Activated CD4-positive, alpha-beta memory T cell treated with anti-CD3 and anti-CD28 coated beads, Interleukin-2, amount 10 ng/mL, durations not matched to agents 7 days and 5 days (primary cell): ENCODE measurements at regions of chr11 and their contacts with region 1.

Region 1: GRCh38 chr11:72722050-72722748 is 30.0 kb downstream of the ARAP1 start:
- DNase-seq: peak; percentile 90
- H3K4me3 Mint-ChIP-seq: peak overlapping the region; percentile 89
- H3K27ac Mint-ChIP-seq: peak overlapping the region; percentile 86
- H3K4me1 Mint-ChIP-seq: peaks cover 60% of the 10 kb centered on the region
- H3K27me3 Mint-ChIP-seq: no peaks in the 10 kb centered on the region

Region 2: GRCh38 chr11:72568861-72569260 is 153.3 kb before region 1 on chr11:
- CTCF ChIA-PET with region 1: no interaction called
- POLR2A ChIA-PET with region 1: no interaction called
- DNase-seq: no peak
- H3K4me3 Mint-ChIP-seq: no peak overlapping the region
- H3K27ac Mint-ChIP-seq: peak overlapping the region; percentile 75
- H3K4me1 Mint-ChIP-seq: peaks cover 40% of the 10 kb centered on the region
- H3K27me3 Mint-ChIP-seq: peaks cover 8% of the 10 kb centered on the region

Region 3: GRCh38 chr11:72673943-72674828 is 48.0 kb before region 1 on chr11 and contains the start of gene PDE2A:
- CTCF ChIA-PET with region 1: no interaction called
- POLR2A ChIA-PET with region 1: no interaction called
- DNase-seq: no peak
- H3K4me3 Mint-ChIP-seq: no peak within 1 kb of the TSS
- H3K27ac Mint-ChIP-seq: no peak within 1 kb of the TSS
- H3K4me1 Mint-ChIP-seq: peaks cover 2% of the 10 kb centered on the region
- H3K27me3 Mint-ChIP-seq: peaks cover 77% of the 10 kb centered on the region
- total RNA-seq, gene PDE2A: 0.93 to 1.8 TPM

Region 4: GRCh38 chr11:72736452-72737069 is 14.4 kb after region 1 on chr11:
- CTCF ChIA-PET with region 1: interaction called, 23 read pairs
- POLR2A ChIA-PET with region 1: interaction called, 7 read pairs
- DNase-seq: peak; percentile 81
- H3K4me3 Mint-ChIP-seq: peak overlapping the region; percentile 41
- H3K27ac Mint-ChIP-seq: peak overlapping the region; percentile 97
- H3K4me1 Mint-ChIP-seq: peaks cover 57% of the 10 kb centered on the region
- H3K27me3 Mint-ChIP-seq: no peaks in the 10 kb centered on the region

Region 5: GRCh38 chr11:72814286-72815109 is 92.3 kb after region 1 on chr11 and contains the start of gene ATG16L2:
- CTCF ChIA-PET with region 1: interaction called, 29 read pairs
- POLR2A ChIA-PET with region 1: interaction called, 24 read pairs
- DNase-seq: peak; percentile 91
- H3K4me3 Mint-ChIP-seq: peak within 1 kb of the TSS; percentile 99
- H3K27ac Mint-ChIP-seq: peak within 1 kb of the TSS; percentile 99
- H3K4me1 Mint-ChIP-seq: peaks cover 52% of the 10 kb centered on the region
- H3K27me3 Mint-ChIP-seq: no peaks in the 10 kb centered on the region
- total RNA-seq, gene ATG16L2: 135 to 137 TPM

Region 6: DNA sequence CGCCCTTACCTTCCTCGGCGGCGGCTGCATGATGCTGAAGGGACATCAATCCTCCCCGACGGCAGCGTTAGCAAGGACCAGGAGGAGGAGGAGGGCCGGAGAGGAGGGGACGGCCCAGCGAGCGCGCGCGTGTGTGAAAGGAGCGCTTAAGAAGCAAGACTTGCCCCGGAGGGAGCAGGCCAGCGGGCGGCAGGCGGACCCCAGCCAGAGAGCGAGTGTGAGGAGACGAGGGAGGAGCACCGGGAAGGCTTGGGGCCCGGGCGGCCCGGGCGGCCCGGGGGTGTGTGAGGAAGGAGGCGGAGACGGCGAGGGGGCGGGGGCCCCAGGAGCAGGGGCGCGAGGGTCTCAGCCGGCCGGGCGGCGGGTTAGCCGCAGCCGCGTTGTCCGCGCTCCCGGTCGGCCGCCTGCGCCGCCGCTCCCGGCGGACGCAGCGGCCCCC is 419.7 kb after region 1 on chr11:
- CTCF ChIA-PET with region 1: interaction called, 10 read pairs
- POLR2A ChIA-PET with region 1: interaction called, 6 read pairs
- DNase-seq: peak; percentile 66
- H3K4me3 Mint-ChIP-seq: peak overlapping the region; percentile 97
- H3K27ac Mint-ChIP-seq: peak overlapping the region; percentile 86
- H3K4me1 Mint-ChIP-seq: peaks cover 46% of the 10 kb centered on the region
- H3K27me3 Mint-ChIP-seq: no peaks in the 10 kb centered on the region